Activated CD4-positive, alpha-beta T cell treated with anti-CD3 and anti-CD28 coated beads, Interleukin-2, amount 10 ng/mL, durations not matched to agents 7 days and 5 days (primary cell): ENCODE measurements at regions of chr5 and their contacts with region 1.

Region 1: GRCh38 chr5:52948418-52949076 is 40.6 kb upstream of the ITGA2 start:
- DNase-seq: peak; percentile 81
- H3K4me3 Mint-ChIP-seq: no peak overlapping the region
- H3K27ac Mint-ChIP-seq: peak overlapping the region; percentile 7
- H3K4me1 Mint-ChIP-seq: peaks cover 25% of the 10 kb centered on the region
- H3K27me3 Mint-ChIP-seq: no peaks in the 10 kb centered on the region

Region 2: GRCh38 chr5:52938226-52938625 is 10.3 kb before region 1 on chr5:
- CTCF ChIA-PET with region 1: interaction called, 16 read pairs
- POLR2A ChIA-PET with region 1: no interaction called
- DNase-seq: no peak
- H3K4me3 Mint-ChIP-seq: no peak overlapping the region
- H3K27ac Mint-ChIP-seq: no peak overlapping the region
- H3K4me1 Mint-ChIP-seq: no peaks in the 10 kb centered on the region
- H3K27me3 Mint-ChIP-seq: peaks cover 22% of the 10 kb centered on the region

Region 3: GRCh38 chr5:53089345-53089991 is 140.9 kb after region 1 on chr5:
- CTCF ChIA-PET with region 1: interaction called, 48 read pairs
- POLR2A ChIA-PET with region 1: no interaction called
- DNase-seq: peak; percentile 40
- H3K4me3 Mint-ChIP-seq: peak overlapping the region; percentile 58
- H3K27ac Mint-ChIP-seq: peak overlapping the region; percentile 78
- H3K4me1 Mint-ChIP-seq: peaks cover 56% of the 10 kb centered on the region
- H3K27me3 Mint-ChIP-seq: no peaks in the 10 kb centered on the region

Region 4: DNA sequence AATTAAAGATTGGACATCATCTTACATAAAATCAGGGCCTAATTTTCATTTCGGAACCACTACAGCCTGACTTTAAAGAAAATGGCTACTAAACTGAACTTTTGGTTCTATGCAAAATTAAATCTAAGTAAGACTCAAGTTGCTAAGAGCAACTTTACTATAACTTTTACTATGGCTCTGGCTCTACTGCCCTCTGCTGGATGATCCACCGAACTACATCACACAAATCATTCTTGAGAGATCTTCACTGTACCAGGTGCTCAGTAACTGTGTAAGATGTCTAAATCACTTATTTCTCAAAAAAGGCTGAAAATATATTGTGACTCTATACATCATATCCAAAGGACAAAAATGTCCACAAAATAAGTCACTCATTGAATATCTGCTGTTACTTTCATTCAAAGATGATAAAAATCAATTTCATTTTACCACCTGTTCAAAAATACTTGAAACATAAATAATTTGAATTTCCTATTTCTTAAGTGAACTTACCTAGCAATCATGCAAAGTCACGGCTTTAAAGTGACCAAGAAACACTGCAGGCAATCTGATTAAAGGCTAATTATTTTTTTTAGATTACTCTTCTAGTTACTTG is 147.5 kb after region 1 on chr5:
- CTCF ChIA-PET with region 1: interaction called, 48 read pairs
- POLR2A ChIA-PET with region 1: no interaction called
- DNase-seq: peak; percentile 82
- H3K4me3 Mint-ChIP-seq: no peak overlapping the region
- H3K27ac Mint-ChIP-seq: peak overlapping the region; percentile 22
- H3K4me1 Mint-ChIP-seq: peaks cover 21% of the 10 kb centered on the region
- H3K27me3 Mint-ChIP-seq: no peaks in the 10 kb centered on the region

Region 5: DNA sequence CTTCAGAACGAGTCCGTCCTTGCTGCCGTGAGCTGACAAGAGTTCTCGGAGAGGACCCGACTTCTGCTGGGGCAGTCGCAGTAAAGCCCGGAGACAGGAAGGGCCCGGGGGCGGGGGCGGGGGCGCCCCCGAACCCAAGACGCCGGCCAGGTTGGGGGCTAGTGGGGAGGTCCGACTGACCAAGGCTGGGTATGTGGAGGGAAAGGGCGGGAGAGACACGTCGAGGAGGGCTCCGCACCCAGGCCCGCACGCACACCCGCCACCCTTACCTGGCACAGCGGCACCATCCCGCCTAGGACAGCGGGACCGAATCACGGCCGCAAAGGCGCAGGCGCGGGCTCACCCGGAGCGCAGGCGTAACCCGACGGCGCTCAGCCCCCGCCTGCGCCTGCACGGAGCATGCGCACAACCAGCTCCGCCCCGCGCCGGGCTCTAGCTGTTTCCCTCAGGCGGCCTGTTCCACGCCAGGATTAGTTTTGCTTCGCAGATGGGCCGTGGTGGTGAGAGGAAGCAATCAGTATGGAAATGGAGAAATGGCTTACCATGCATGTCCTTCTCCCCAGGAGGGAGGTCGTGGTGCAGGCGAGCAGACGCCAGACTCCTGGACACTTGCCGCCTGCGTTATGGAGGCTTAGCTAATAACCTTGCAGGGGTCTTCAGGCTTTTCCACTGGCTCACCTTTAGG is 161.0 kb after region 1 on chr5 and contains the start of gene MOCS2:
- CTCF ChIA-PET with region 1: interaction called, 10 read pairs
- POLR2A ChIA-PET with region 1: no interaction called
- DNase-seq: peak; percentile 91
- H3K4me3 Mint-ChIP-seq: peak within 1 kb of the TSS; percentile 96
- H3K27ac Mint-ChIP-seq: peak within 1 kb of the TSS; percentile 94
- H3K4me1 Mint-ChIP-seq: peaks cover 42% of the 10 kb centered on the region
- H3K27me3 Mint-ChIP-seq: no peaks in the 10 kb centered on the region
- total RNA-seq, gene MOCS2: 24.3 to 25.0 TPM